ENCODE measurements at regions of chr6 and their contacts with region 1.

Region 1: DNA sequence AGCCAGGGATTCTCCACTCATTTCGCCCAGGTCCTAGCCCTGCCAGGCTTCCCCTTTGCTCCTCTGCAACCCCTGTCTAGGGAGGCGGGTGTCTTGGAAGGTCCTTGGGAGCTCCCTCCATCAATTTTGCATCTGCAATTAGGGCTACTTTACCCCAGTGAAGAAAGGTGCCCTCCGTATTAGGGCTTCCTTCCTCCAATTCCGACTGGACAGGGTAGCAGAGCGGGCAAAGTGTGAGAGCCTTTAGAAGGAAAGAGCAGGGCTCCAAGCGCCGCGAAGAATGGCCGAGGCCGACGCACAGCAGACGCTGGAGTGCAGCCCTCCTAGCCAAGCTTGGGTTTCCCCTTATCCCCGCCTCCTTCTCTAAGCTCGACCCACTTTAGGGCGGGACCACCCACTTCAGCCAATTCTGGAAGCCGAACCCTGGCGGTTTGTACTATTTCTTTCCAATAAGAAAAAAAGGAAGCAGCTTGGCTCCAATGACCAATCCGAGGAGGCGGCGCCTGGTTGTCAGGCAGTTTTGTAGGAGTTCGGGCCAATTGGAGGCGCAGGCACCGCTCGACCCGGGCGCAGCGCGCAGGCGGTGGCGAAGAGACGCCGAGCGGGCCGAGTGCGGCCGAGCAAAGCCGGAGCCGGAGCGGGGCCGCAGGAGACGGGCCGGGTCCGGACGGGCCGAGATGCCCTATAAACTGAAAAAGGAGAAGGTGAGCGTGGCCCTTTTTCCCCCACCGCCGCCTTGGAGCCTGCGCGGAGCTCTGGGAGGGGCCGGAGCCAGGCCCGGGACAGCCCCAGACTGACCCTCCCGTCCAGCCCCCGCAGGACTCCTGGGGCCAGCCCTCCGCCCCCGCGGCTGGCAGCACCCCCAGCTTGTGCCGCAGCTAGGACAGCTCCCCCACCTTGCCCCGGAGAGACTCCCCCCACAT is at the start of gene PPP2R5D:
- DNase-seq: peak; percentile 96
- H3K4me3 ChIP-seq: peak within 1 kb of the TSS; percentile 76
- H3K27ac ChIP-seq: peak within 1 kb of the TSS; percentile 89
- H3K27me3 ChIP-seq: no peaks in the 10 kb centered on the region
- CTCF ChIP-seq: no peak
- polyA plus RNA-seq, gene PPP2R5D: 59.5 and 61.5 TPM in 2 replicates

Region 2: GRCh38 chr6:42532038-42532669 is 452.1 kb before region 1 on chr6:
- CTCF ChIA-PET with region 1: no interaction called
- POLR2A ChIA-PET with region 1: no interaction called
- DNase-seq: no peak
- H3K4me3 ChIP-seq: no peak overlapping the region
- H3K27ac ChIP-seq: no peak overlapping the region
- H3K27me3 ChIP-seq: no peaks in the 10 kb centered on the region
- CTCF ChIP-seq: peak; percentile 84

Region 3: DNA sequence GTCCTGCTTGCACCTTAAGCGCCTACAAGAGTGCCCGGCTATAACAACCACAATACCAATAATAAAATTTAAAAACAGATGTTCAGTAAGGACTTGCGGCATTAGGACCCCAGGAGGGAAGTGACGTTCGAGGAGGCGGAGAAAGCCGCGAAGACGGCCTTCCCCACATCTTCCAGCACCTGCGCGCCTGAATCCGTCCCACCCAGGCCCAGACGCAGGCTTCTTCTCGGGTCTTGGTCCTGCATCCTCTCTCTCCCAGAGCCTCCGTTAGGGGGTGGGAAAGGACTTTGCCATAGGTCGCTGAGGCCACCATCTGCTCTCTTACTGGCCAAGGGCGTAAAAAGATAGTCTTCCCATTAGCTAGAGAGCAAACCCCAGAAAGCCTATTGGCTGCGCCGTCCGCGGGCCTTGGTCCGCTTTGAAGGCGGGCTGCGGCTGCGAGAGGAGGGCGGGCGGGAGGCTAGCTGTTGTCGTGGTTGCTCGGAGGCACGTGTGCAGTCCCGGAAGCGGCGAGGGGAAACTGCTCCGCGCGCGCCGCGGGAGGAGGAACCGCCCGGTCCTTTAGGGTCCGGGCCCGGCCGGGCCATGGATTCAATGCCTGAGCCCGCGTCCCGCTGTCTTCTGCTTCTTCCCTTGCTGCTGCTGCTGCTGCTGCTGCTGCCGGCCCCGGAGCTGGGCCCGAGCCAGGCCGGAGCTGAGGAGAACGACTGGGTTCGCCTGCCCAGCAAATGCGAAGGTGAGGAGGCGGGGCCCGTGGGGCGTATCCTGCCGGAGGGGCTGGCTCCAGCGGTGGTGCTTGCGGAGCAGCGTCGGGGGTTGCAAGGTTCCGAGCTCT is 55.1 kb before region 1 on chr6 and contains the start of gene CNPY3:
- CTCF ChIA-PET with region 1: no interaction called
- POLR2A ChIA-PET with region 1: interaction called, 18 read pairs
- DNase-seq: peak; percentile 93
- H3K4me3 ChIP-seq: peak within 1 kb of the TSS; percentile 76
- H3K27ac ChIP-seq: peak within 1 kb of the TSS; percentile 96
- H3K27me3 ChIP-seq: peaks cover 2% of the 10 kb centered on the region
- CTCF ChIP-seq: no peak
- polyA plus RNA-seq, gene CNPY3: 38.4 and 39.2 TPM in 2 replicates

Region 4: DNA sequence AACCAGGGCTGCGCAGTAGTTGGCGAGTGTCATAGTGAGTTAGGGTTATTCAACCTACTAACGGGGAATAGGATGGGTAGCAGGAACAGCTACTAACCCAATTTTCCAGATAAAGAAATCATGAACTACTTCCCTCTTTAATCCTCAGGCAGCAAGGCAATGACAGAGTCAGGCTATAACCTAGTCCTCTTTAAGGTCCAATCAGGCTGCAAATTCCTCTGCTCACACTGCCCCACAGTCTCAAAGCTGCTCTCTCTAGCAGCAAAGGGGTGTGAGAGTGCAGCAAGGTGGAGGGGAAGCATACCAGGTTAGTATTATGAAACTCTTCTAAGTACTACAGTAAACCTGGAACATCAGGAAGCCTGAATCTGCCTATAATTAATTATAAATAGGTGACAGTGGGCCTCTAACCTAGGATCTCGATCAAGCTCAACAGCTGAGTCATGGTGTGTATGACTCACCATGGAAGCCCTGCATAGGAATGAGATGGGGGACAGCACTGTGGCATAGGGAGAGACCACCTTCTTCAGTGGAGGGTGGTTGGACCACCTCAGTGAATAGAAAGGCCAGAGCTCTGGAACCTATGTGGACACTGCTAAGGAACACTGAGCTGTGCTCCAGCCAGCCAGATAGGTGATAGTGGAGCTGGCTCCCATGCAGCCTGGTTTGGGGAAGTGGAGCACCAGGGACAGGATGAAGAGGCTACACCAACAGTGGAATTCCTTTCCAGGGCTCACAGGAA is 13.2 kb before region 1 on chr6:
- CTCF ChIA-PET with region 1: no interaction called
- POLR2A ChIA-PET with region 1: interaction called, 11 read pairs
- DNase-seq: no peak
- H3K4me3 ChIP-seq: no peak overlapping the region
- H3K27ac ChIP-seq: no peak overlapping the region
- H3K27me3 ChIP-seq: no peaks in the 10 kb centered on the region
- CTCF ChIP-seq: no peak

Region 5: DNA sequence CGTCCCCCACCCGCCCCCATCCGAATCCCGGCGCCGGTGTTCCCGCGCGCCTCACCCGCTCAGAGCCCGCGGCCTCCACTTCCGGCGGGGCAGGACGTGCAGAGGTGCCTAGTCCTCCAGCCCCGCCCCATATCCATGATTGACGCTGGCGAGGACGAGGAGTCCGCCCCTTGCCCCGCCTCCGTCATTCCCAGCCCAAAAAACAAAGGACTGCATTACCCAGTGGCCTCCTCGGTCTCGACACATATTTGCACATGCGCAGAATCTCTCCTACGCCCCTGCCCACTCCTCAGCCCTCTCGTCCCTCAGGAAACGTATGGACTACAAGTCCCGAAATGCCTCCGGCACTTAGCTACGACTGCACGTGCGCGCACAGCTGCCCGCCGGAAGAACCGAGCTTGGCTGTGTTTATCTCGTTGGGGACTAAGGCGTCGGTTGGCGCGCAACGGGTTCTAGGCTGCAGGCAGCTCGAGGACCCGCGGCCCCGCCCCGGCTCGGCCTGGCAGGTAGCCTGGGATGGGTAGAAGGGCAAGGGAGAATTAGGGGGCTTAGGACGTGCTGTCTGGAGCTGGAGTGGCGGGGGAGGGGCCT is 29.7 kb after region 1 on chr6 and contains the starts of genes KLHDC3 and MEA1:
- CTCF ChIA-PET with region 1: no interaction called
- POLR2A ChIA-PET with region 1: interaction called, 12 read pairs
- DNase-seq: peak; percentile 100
- H3K4me3 ChIP-seq: peak within 1 kb of the TSS; percentile 99
- H3K27ac ChIP-seq: peak within 1 kb of the TSS; percentile 57
- H3K27me3 ChIP-seq: no peaks in the 10 kb centered on the region
- CTCF ChIP-seq: no peak
- polyA plus RNA-seq, gene KLHDC3: 41.3 and 48.8 TPM in 2 replicates
- polyA plus RNA-seq, gene MEA1: 86.5 and 97.9 TPM in 2 replicates

Region 6: DNA sequence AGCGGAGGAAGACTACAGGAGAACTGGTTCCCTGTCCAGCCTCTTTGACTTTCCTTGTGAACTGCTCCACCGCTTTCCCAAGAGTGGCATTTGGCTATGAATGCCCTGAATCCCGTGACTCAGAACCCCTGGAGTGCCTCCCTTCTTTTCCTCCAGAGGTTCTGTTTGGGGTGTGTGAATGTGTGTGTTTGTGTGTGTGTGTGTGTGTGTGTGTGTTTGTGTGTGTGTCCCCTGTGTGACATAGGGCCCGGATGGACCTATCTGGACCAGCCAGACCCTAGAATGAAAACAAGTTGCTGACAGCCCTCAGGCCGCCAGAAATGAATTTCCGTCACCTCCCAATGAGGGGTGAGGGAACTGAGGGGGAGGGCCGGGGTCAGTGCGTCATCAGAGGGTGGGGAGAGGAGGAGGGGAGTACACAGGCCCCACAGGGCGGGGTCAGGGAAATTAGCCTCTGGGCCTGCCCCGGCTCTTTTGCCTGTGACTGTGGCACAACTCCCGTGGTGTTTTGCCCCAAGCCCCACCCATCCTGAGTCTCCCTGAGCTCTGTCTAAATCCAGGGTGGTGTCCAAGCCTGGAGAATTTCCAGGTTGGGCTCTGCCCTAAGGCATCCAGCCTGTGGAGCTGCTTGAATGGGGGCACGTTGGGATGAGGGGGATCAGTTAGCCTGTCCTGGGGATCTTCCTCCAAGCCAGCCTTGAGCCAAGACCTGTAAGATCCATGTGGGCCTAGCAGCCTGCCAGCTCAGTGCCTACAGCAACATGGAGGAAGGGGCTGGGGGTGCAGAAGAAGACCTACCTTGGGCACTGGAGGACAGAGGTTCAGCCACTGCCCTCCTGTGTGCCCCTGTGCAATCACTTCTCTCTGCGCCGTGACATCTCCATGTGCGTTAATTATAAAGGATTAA is 718.5 kb after region 1 on chr6:
- CTCF ChIA-PET with region 1: no interaction called
- POLR2A ChIA-PET with region 1: no interaction called
- DNase-seq: peak; percentile 61
- H3K4me3 ChIP-seq: no peak overlapping the region
- H3K27ac ChIP-seq: peak overlapping the region; percentile 80
- H3K27me3 ChIP-seq: no peaks in the 10 kb centered on the region
- CTCF ChIP-seq: no peak